ENCODE measurements at regions of chr3 and their contacts with region 1.

Region 1: DNA sequence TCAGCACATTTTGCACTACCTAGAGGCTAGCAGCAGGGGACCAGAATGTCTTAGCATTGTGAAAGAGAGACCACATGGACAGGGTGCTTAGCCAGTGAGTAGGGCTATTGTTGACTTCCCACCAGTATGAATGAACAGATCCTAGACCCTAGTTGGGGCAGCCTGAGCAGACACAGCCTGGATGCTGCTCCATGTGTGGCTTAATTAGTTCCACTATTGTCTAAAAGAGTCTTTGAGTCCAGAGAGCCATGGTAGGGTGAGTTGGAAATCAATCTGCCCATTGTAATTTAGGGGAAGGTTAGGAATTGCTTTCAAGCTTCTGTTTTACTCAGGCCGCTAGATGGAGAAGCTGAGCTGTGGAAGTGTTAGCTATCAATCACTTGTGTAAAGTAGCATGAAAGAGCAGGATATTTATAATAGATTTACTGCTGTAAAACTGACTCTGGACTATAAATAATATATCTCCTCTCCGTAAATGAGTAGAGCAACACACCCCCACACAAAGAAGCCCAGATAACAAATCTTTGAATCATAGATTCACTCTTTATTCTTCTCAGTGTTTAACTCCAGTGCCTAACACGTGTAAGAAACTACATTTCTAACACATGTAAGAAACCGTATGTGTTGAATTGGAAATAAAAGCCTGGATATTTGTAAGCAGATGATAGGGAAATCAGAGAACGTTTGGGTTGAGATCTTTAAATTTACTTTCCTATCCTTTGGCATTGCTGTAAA is 4.1 kb upstream of the GCSAM start:
- DNase-seq: peak; percentile 81
- H3K4me3 Mint-ChIP-seq: no peak overlapping the region
- H3K27ac Mint-ChIP-seq: no peak overlapping the region
- H3K4me1 Mint-ChIP-seq: peaks cover 64% of the 10 kb centered on the region
- H3K27me3 Mint-ChIP-seq: no peaks in the 10 kb centered on the region

Region 2: DNA sequence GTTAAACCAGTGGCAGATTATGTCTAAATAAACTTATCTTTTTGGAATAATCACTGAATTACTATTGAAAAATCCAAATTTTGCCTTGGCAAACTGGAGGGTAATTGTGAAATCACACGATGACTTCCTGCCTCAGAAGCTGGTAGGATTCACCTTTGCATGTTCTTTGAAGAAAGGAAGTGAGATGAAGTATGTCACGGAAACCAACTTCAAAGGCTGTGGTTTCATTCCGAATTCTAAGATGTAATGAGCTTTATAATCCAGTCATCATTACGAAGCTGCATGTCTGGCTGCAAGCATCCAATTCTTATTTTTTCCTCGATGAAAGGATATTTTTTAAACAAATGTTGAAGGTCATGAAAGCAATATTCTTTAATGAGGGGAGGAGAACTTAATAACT is 526.9 kb before region 1 on chr3:
- CTCF ChIA-PET with region 1: no interaction called
- intact Hi-C with region 1: loop called (anchors 2 kb)
- DNase-seq: peak; percentile 71
- H3K4me3 Mint-ChIP-seq: peak overlapping the region; percentile 56
- H3K27ac Mint-ChIP-seq: peak overlapping the region; percentile 97
- H3K4me1 Mint-ChIP-seq: peaks cover 94% of the 10 kb centered on the region
- H3K27me3 Mint-ChIP-seq: no peaks in the 10 kb centered on the region

Region 3: DNA sequence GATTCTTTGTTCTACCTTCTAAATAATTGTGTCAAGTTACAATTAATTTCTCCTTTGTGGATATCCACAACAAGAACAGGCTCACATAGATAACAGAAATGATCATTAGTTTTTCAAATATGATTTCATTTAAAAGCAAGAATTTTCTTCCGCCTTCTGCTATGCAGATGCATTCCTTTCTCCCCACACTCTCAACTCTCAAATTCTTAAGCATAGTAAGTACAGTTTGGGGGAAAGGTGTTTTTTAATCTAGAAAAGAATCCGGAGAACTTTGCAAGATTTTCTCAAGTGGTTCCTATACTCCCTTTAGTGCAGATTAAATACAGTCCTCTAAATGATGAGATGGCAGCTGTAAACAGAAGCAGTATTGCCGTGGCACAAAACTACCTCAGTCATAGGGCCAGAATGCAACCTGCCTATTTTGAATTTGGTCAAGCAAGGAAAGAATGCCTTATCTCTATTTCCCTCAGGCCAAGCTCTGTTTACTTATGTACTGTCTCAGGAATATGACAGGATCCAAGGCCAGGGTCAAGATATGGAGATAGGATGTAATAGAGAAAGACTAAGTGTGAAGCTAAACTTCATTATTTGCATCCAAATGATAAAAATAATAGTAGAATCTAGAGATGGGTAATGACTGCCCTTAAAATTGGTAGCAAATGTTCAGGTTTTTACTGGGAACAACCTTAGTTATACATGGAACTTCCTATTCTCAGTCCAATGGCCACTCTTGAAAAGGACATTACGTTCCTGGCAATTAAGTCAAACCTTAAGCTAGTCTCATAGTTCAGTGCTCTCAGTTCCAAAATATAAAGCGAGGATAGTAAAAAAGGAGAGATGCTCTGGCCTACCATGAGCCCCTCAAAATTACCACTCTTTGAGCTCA is 355.3 kb before region 1 on chr3:
- CTCF ChIA-PET with region 1: no interaction called
- intact Hi-C with region 1: no loop called
- DNase-seq: no peak
- H3K4me3 Mint-ChIP-seq: no peak overlapping the region
- H3K27ac Mint-ChIP-seq: no peak overlapping the region
- H3K4me1 Mint-ChIP-seq: no peaks in the 10 kb centered on the region
- H3K27me3 Mint-ChIP-seq: no peaks in the 10 kb centered on the region

Region 4: GRCh38 chr3:112293368-112294321 is 156.5 kb after region 1 on chr3 and contains the start of gene SLC9C1:
- CTCF ChIA-PET with region 1: interaction called, 31 read pairs
- intact Hi-C with region 1: loop called (anchors 1 kb)
- DNase-seq: peak; percentile 72
- H3K4me3 Mint-ChIP-seq: peak within 1 kb of the TSS; percentile 60
- H3K27ac Mint-ChIP-seq: peak within 1 kb of the TSS; percentile 20
- H3K4me1 Mint-ChIP-seq: peaks cover 19% of the 10 kb centered on the region
- H3K27me3 Mint-ChIP-seq: no peaks in the 10 kb centered on the region
- total RNA-seq, gene SLC9C1: not detected

Region 5: DNA sequence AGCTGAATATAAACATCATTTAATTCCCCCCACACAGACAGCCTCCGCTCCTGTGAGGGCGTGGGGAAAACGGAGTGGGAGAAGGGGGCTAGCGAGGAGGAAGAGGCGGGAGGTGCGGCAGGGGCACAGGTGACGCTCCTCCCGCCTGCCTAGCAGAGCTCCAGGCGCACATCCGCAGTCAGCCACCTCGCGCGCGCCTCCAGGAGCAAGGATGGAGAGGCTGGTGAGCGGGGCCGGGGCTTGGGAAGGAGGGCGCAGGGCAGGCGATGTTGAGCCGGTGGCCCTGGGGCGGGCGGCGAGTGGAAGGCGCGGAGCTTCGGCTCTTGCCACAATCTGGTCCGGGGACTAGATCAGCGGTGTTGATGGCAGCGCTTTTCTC is 195.9 kb after region 1 on chr3 and contains the start of gene CD200:
- CTCF ChIA-PET with region 1: interaction called, 12 read pairs
- intact Hi-C with region 1: no loop called
- DNase-seq: peak; percentile 75
- H3K4me3 Mint-ChIP-seq: peak within 1 kb of the TSS; percentile 94
- H3K27ac Mint-ChIP-seq: peak within 1 kb of the TSS; percentile 99
- H3K4me1 Mint-ChIP-seq: peaks cover 39% of the 10 kb centered on the region
- H3K27me3 Mint-ChIP-seq: no peaks in the 10 kb centered on the region
- total RNA-seq, gene CD200: 50.0 to 53.6 TPM

Region 6: DNA sequence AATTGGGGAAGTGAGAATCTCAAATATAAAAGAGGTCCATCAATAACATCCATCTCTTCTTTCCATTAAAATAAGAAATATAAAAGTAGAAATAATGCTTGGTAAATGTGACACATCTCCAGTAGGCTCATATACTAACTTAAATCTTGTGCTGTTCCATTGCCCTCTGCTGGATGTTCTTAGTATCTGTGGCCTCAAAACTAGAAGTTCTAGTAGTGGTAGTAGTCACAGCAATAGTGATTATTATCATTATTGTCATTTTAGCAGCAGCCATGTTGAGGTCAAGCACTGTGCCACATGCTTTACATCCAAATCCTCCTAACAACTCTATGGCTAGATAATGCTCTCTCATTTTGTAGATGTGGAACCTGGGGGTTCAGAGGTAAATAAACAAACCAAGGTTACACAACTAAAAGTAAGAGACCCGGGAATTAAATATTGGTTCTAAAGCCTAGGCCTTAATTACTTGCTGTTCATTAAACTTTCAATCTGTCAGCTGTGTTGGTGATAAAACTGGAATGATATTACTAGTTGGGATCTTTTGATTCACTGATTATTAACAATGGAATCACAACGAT is 382.4 kb after region 1 on chr3:
- CTCF ChIA-PET with region 1: interaction called, 4 read pairs
- intact Hi-C with region 1: loop called (anchors 1 kb)
- DNase-seq: peak; percentile 53
- H3K4me3 Mint-ChIP-seq: no peak overlapping the region
- H3K27ac Mint-ChIP-seq: peak overlapping the region; percentile 84
- H3K4me1 Mint-ChIP-seq: peaks cover 34% of the 10 kb centered on the region
- H3K27me3 Mint-ChIP-seq: no peaks in the 10 kb centered on the region

Region 7: GRCh38 chr3:112568642-112569041 is 431.5 kb after region 1 on chr3:
- CTCF ChIA-PET with region 1: no interaction called
- intact Hi-C with region 1: no loop called
- DNase-seq: no peak
- H3K4me3 Mint-ChIP-seq: no peak overlapping the region
- H3K27ac Mint-ChIP-seq: no peak overlapping the region
- H3K4me1 Mint-ChIP-seq: peaks cover 11% of the 10 kb centered on the region
- H3K27me3 Mint-ChIP-seq: no peaks in the 10 kb centered on the region

Region 8: DNA sequence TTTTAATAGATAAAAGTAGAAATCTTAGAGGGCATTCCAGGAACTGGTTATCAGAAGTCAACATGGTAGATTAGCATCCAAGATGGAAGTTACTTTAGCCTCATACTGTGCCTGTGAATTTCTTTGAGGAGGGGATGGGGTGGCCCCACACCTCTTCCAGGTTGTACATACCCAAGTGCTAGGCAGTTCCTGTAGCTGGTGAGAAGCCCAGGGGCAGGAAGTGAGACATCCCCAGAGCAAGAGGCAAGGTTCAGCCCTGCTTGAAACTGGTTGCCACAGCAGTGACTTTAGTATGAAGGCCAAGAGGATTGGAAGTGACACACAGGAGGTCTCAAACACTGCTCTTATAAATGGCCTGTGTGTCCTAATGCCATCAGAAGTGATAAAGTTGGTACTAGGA is 865.6 kb after region 1 on chr3:
- CTCF ChIA-PET with region 1: no interaction called
- intact Hi-C with region 1: loop called (anchors 5 kb)
- DNase-seq: peak; percentile 90
- H3K4me3 Mint-ChIP-seq: peak overlapping the region; percentile 42
- H3K27ac Mint-ChIP-seq: peak overlapping the region; percentile 95
- H3K4me1 Mint-ChIP-seq: peaks cover 86% of the 10 kb centered on the region
- H3K27me3 Mint-ChIP-seq: no peaks in the 10 kb centered on the region